ENCODE measurements at regions of chr20 and their contacts with region 1.

Region 1: GRCh38 chr20:50070991-50071888 is 41.7 kb downstream of the UBE2V1 start:
- DNase-seq: peak; percentile 91
- ATAC-seq: peak; percentile 100
- H3K4me3 ChIP-seq: peak overlapping the region in 3 of 5 experiments; percentile 25 to 54 (median 40)
- H3K4me3 Mint-ChIP-seq: peak overlapping the region; percentile 15
- H3K27ac ChIP-seq: no peak overlapping the region
- H3K27ac Mint-ChIP-seq: no peak overlapping the region
- H3K4me1 ChIP-seq: peaks cover 5 to 10% of the 10 kb centered on the region in 2 donors
- H3K4me1 Mint-ChIP-seq: peaks cover 5% of the 10 kb centered on the region
- H3K27me3 ChIP-seq: no peaks in the 10 kb centered on the region
- H3K27me3 Mint-ChIP-seq: no peaks in the 10 kb centered on the region
- CTCF ChIP-seq: peak; percentile 99

Region 2: DNA sequence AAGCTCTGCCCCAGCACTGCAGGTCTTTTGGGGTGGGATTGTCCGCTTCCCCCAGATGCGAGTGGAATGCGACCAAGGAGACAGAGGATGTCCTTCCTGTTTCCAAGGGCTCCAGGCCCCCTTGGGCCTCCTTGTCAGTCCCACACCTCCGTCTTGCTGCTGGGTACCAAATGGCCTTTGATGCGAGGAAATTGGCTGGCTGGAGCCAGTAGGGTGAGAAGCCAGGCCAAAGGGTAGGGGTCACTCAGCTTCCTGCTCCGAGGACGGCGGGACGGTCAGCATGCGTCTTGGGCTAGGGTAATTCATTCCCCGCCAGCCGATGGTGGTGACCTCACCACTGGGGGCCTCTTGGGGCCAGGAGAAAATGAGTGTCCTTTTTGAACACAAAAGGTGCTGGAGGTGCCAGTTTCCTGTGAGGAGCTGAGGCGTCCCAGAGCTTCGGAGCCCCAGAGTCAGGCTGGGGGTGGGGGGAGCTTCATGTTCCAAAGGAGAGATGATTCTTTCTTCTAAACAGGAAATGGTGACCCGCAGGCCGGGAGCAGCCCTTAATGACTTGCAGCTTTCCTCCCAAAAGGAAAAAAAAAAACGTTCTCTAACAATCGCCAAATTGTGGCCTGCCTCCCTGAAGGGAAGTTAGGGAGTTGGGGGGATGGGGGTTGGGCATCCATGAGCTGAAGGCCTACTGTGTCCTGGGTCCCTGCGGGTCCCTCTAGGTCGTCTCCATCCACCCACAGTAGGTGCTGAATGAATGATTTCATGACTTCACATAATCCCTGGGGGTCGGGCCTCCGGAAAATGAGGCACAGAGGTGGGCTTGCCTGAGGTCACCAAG is 81.8 kb before region 1 on chr20:
- CTCF ChIA-PET with region 1: interaction called, 531 read pairs
- POLR2A ChIA-PET with region 1: no interaction called
- intact Hi-C with region 1: no loop called
- DNase-seq: no peak
- ATAC-seq: no peak
- H3K4me3 ChIP-seq: no peak overlapping the region
- H3K4me3 Mint-ChIP-seq: no peak overlapping the region
- H3K27ac ChIP-seq: no peak overlapping the region
- H3K27ac Mint-ChIP-seq: no peak overlapping the region
- H3K4me1 ChIP-seq: peaks cover 3 to 8% of the 10 kb centered on the region in 2 donors
- H3K4me1 Mint-ChIP-seq: peaks cover 6% of the 10 kb centered on the region
- H3K27me3 ChIP-seq: peaks cover 0 to 6% (median 0%) of the 10 kb centered on the region in 4 experiments
- H3K27me3 Mint-ChIP-seq: no peaks in the 10 kb centered on the region
- CTCF ChIP-seq: no peak

Region 3: GRCh38 chr20:50041246-50041873 is 29.9 kb before region 1 on chr20:
- CTCF ChIA-PET with region 1: interaction called, 13 read pairs
- POLR2A ChIA-PET with region 1: no interaction called
- intact Hi-C with region 1: loop called (anchors 1 kb)
- DNase-seq: peak; percentile 83
- ATAC-seq: peak; percentile 88
- H3K4me3 ChIP-seq: peak overlapping the region in 4 of 5 experiments; percentile 1 to 38 (median 34)
- H3K4me3 Mint-ChIP-seq: peak overlapping the region; percentile 83
- H3K27ac ChIP-seq: peak overlapping the region; percentile 80 to 86
- H3K27ac Mint-ChIP-seq: peak overlapping the region; percentile 93
- H3K4me1 ChIP-seq: peaks cover 12 to 22% of the 10 kb centered on the region in 2 donors
- H3K4me1 Mint-ChIP-seq: peaks cover 15% of the 10 kb centered on the region
- H3K27me3 ChIP-seq: no peaks in the 10 kb centered on the region
- H3K27me3 Mint-ChIP-seq: no peaks in the 10 kb centered on the region
- CTCF ChIP-seq: no peak

Region 4: GRCh38 chr20:50085452-50086365 is 14.5 kb after region 1 on chr20:
- CTCF ChIA-PET with region 1: interaction called, 92 read pairs
- POLR2A ChIA-PET with region 1: no interaction called
- intact Hi-C with region 1: loop called (anchors 1 kb)
- DNase-seq: peak; percentile 71
- ATAC-seq: peak; percentile 86
- H3K4me3 ChIP-seq: peak overlapping the region; percentile 30 to 78 (median 61)
- H3K4me3 Mint-ChIP-seq: peak overlapping the region; percentile 88
- H3K27ac ChIP-seq: peak overlapping the region in 1 of 2 donors; percentile 65
- H3K27ac Mint-ChIP-seq: peak overlapping the region; percentile 64
- H3K4me1 ChIP-seq: peaks cover 12 to 13% of the 10 kb centered on the region in 2 donors
- H3K4me1 Mint-ChIP-seq: peaks cover 13% of the 10 kb centered on the region
- H3K27me3 ChIP-seq: no peaks in the 10 kb centered on the region
- H3K27me3 Mint-ChIP-seq: no peaks in the 10 kb centered on the region
- CTCF ChIP-seq: peak; percentile 87

Region 5: GRCh38 chr20:50115591-50116372 is 44.5 kb after region 1 on chr20:
- CTCF ChIA-PET with region 1: interaction called, 15 read pairs
- POLR2A ChIA-PET with region 1: no interaction called
- intact Hi-C with region 1: no loop called
- DNase-seq: peak; percentile 87
- ATAC-seq: peak; percentile 77
- H3K4me3 ChIP-seq: peak overlapping the region; percentile 54 to 78 (median 64)
- H3K4me3 Mint-ChIP-seq: peak overlapping the region; percentile 85
- H3K27ac ChIP-seq: peak overlapping the region; percentile 38 to 53
- H3K27ac Mint-ChIP-seq: peak overlapping the region; percentile 86
- H3K4me1 ChIP-seq: peaks cover 39 to 40% of the 10 kb centered on the region in 2 donors
- H3K4me1 Mint-ChIP-seq: peaks cover 56% of the 10 kb centered on the region
- H3K27me3 ChIP-seq: no peaks in the 10 kb centered on the region
- H3K27me3 Mint-ChIP-seq: no peaks in the 10 kb centered on the region
- CTCF ChIP-seq: no peak

Measured in B cell (primary cell).